ENCODE measurements at regions of chr18 and their contacts with region 1.

Region 1: GRCh38 chr18:2589345-2590068 is 18.1 kb downstream of the NDC80 start:
- DNase-seq: peak in 2 of 9 experiments; percentile 28 to 62
- ATAC-seq: peak; percentile 76
- H3K4me3 ChIP-seq: peak overlapping the region; percentile 38 to 50
- H3K4me3 Mint-ChIP-seq: peak overlapping the region; percentile 71
- H3K27ac ChIP-seq: peak overlapping the region; percentile 42 to 92
- H3K27ac Mint-ChIP-seq: peak overlapping the region; percentile 92
- H3K4me1 ChIP-seq: peaks cover 46% of the 10 kb centered on the region
- H3K4me1 Mint-ChIP-seq: peaks cover 53% of the 10 kb centered on the region
- H3K27me3 ChIP-seq: no peaks in the 10 kb centered on the region
- H3K27me3 Mint-ChIP-seq: no peaks in the 10 kb centered on the region
- CTCF ChIP-seq: no peak

Region 2: GRCh38 chr18:2351121-2351850 is 238.2 kb before region 1 on chr18:
- CTCF ChIA-PET with region 1: no interaction called
- POLR2A ChIA-PET with region 1: no interaction called
- intact Hi-C with region 1: no loop called
- DNase-seq: no peak
- ATAC-seq: no peak
- H3K4me3 ChIP-seq: no peak overlapping the region
- H3K4me3 Mint-ChIP-seq: no peak overlapping the region
- H3K27ac ChIP-seq: no peak overlapping the region
- H3K27ac Mint-ChIP-seq: no peak overlapping the region
- H3K4me1 ChIP-seq: no peaks in the 10 kb centered on the region
- H3K4me1 Mint-ChIP-seq: no peaks in the 10 kb centered on the region
- H3K27me3 ChIP-seq: no peaks in the 10 kb centered on the region
- H3K27me3 Mint-ChIP-seq: peaks cover 8% of the 10 kb centered on the region
- CTCF ChIP-seq: no peak

Region 3: GRCh38 chr18:2515908-2516625 is 73.4 kb before region 1 on chr18:
- CTCF ChIA-PET with region 1: no interaction called
- POLR2A ChIA-PET with region 1: no interaction called
- intact Hi-C with region 1: no loop called
- DNase-seq: peak in 2 of 9 experiments; percentile 12 to 43
- ATAC-seq: peak; percentile 75
- H3K4me3 ChIP-seq: no peak overlapping the region
- H3K4me3 Mint-ChIP-seq: no peak overlapping the region
- H3K27ac ChIP-seq: no peak overlapping the region
- H3K27ac Mint-ChIP-seq: peak overlapping the region; percentile 66
- H3K4me1 ChIP-seq: peaks cover 18% of the 10 kb centered on the region
- H3K4me1 Mint-ChIP-seq: peaks cover 18% of the 10 kb centered on the region
- H3K27me3 ChIP-seq: no peaks in the 10 kb centered on the region
- H3K27me3 Mint-ChIP-seq: no peaks in the 10 kb centered on the region
- CTCF ChIP-seq: no peak

Region 4: GRCh38 chr18:2606335-2606734 is 16.8 kb after region 1 on chr18:
- CTCF ChIA-PET with region 1: interaction called, 5 read pairs
- POLR2A ChIA-PET with region 1: interaction called, 7 read pairs
- intact Hi-C with region 1: loop called (anchors 2 kb)
- DNase-seq: peak in 2 of 9 experiments; percentile 38 to 70
- ATAC-seq: peak; percentile 56
- H3K4me3 ChIP-seq: no peak overlapping the region
- H3K4me3 Mint-ChIP-seq: peak overlapping the region; percentile 43
- H3K27ac ChIP-seq: peak overlapping the region; percentile 19 to 74
- H3K27ac Mint-ChIP-seq: peak overlapping the region; percentile 85
- H3K4me1 ChIP-seq: peaks cover 33% of the 10 kb centered on the region
- H3K4me1 Mint-ChIP-seq: peaks cover 54% of the 10 kb centered on the region
- H3K27me3 ChIP-seq: no peaks in the 10 kb centered on the region
- H3K27me3 Mint-ChIP-seq: no peaks in the 10 kb centered on the region
- CTCF ChIP-seq: no peak

Region 5: DNA sequence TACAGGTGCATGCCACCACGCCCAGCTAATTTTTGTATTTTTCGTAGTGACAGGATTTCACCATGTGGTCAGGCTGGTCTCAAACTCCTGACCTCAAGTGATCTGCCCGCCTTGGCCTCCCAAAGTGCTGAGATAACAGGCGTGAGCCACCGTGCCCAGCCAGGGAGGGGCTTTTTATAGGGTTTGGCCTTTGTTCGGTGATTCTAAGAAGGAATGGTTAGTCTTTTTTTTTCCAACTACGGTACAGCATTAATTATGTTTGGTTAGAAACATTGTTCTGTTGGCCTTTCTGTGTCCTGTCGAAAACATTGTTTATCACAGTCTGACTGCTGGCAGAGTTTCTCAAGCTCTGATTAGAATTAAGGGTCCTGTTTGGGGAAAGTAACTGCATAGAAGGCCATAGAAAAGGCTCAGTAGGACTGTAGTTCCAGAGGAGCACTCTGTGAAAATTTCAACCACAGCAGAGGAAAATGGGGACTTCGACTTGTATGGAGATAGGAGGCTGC is 46.7 kb after region 1 on chr18:
- CTCF ChIA-PET with region 1: interaction called, 7 read pairs
- POLR2A ChIA-PET with region 1: interaction called, 40 read pairs
- intact Hi-C with region 1: loop called in 1 of 2 experiments (anchors 1 kb)
- DNase-seq: peak in 2 of 9 experiments; percentile 22 to 65
- ATAC-seq: peak; percentile 43
- H3K4me3 ChIP-seq: peak overlapping the region; percentile 41 to 44
- H3K4me3 Mint-ChIP-seq: peak overlapping the region; percentile 83
- H3K27ac ChIP-seq: peak overlapping the region; percentile 92 to 95
- H3K27ac Mint-ChIP-seq: peak overlapping the region; percentile 100
- H3K4me1 ChIP-seq: peaks cover 64% of the 10 kb centered on the region
- H3K4me1 Mint-ChIP-seq: peaks cover 88% of the 10 kb centered on the region
- H3K27me3 ChIP-seq: no peaks in the 10 kb centered on the region
- H3K27me3 Mint-ChIP-seq: no peaks in the 10 kb centered on the region
- CTCF ChIP-seq: no peak

Region 6: GRCh38 chr18:2641638-2642037 is 52.1 kb after region 1 on chr18:
- CTCF ChIA-PET with region 1: interaction called, 7 read pairs
- POLR2A ChIA-PET with region 1: interaction called, 40 read pairs
- intact Hi-C with region 1: loop called in 1 of 2 experiments (anchors 1 kb)
- DNase-seq: peak in 2 of 9 experiments; percentile 62 to 83
- ATAC-seq: peak; percentile 31
- H3K4me3 ChIP-seq: peak overlapping the region; percentile 22 to 29
- H3K4me3 Mint-ChIP-seq: peak overlapping the region; percentile 79
- H3K27ac ChIP-seq: peak overlapping the region; percentile 40 to 92
- H3K27ac Mint-ChIP-seq: peak overlapping the region; percentile 95
- H3K4me1 ChIP-seq: peaks cover 72% of the 10 kb centered on the region
- H3K4me1 Mint-ChIP-seq: peaks cover 48% of the 10 kb centered on the region
- H3K27me3 ChIP-seq: no peaks in the 10 kb centered on the region
- H3K27me3 Mint-ChIP-seq: no peaks in the 10 kb centered on the region
- CTCF ChIP-seq: no peak

Measured in CD8-positive, alpha-beta T cell (primary cell).